Heart right ventricle (tissue), 16 donors: ENCODE measurements at regions of chr11 and their contacts with region 1.

Region 1: DNA sequence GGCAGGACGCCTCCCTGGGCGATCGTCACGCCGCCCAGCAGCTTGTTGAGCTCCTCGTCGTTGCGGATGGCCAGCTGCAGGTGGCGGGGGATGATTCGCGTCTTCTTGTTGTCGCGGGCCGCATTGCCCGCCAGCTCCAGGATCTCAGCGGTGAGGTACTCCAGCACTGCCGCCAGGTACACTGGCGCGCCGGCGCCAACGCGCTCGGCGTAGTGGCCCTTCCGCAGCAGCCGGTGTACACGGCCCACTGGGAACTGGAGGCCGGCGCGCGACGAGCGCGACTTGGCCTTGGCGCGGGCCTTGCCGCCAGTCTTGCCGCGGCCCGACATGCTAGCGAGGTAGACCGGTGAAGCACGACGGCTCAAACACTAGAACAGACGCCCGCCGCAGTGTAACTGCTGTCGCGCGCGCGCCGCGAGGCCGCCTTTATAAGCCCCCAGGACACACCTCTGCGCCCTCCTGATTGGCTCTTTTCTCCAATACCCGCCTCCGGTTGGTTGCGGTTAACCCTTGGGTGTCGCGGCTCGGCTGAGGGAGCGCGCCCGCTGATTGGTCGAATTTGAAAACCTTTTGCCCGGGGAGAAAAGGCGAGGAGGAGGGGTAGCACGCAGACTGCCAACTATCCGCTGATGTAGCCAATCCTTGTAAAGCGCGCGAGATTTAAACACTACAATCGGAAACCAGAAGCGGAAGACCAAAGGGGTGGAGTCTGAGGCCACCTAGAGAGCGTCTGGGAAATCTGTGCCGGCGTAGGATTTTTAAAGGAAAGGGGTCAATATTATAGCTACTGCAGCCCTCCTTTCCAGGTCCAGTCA is 6.4 kb downstream of the DPAGT1 start:
- DNase-seq: peak; percentile 97 to 99
- ATAC-seq: peak; percentile 94 to 98 (median 97)
- H3K4me3 ChIP-seq: peak overlapping the region; percentile 58 to 98 (median 84)
- H3K27ac ChIP-seq: peak overlapping the region; percentile 82 to 95 (median 94)
- H3K4me1 ChIP-seq: peaks cover 10 to 47% (median 28%) of the 10 kb centered on the region in 9 donors
- H3K27me3 ChIP-seq: no peaks in the 10 kb centered on the region
- CTCF ChIP-seq: peak in 3 of 9 donors; percentile 16 to 32 (median 20)

Region 2: GRCh38 chr11:118607401-118608359 is 487.6 kb before region 1 on chr11 and contains the start of gene PHLDB1:
- intact Hi-C with region 1: no loop called
- DNase-seq: peak; percentile 76 to 79
- ATAC-seq: peak; percentile 23 to 63 (median 51)
- H3K4me3 ChIP-seq: peak within 1 kb of the TSS; percentile 65 to 97 (median 92)
- H3K27ac ChIP-seq: peak within 1 kb of the TSS; percentile 94 to 99 (median 97)
- H3K4me1 ChIP-seq: peaks cover 10 to 83% (median 44%) of the 10 kb centered on the region in 9 donors
- H3K27me3 ChIP-seq: peaks cover 0 to 55% (median 0%) of the 10 kb centered on the region in 7 donors
- CTCF ChIP-seq: peak; percentile 11 to 72 (median 58)
- total RNA-seq, gene PHLDB1: 81.9 to 125 (median 114) TPM

Region 3: DNA sequence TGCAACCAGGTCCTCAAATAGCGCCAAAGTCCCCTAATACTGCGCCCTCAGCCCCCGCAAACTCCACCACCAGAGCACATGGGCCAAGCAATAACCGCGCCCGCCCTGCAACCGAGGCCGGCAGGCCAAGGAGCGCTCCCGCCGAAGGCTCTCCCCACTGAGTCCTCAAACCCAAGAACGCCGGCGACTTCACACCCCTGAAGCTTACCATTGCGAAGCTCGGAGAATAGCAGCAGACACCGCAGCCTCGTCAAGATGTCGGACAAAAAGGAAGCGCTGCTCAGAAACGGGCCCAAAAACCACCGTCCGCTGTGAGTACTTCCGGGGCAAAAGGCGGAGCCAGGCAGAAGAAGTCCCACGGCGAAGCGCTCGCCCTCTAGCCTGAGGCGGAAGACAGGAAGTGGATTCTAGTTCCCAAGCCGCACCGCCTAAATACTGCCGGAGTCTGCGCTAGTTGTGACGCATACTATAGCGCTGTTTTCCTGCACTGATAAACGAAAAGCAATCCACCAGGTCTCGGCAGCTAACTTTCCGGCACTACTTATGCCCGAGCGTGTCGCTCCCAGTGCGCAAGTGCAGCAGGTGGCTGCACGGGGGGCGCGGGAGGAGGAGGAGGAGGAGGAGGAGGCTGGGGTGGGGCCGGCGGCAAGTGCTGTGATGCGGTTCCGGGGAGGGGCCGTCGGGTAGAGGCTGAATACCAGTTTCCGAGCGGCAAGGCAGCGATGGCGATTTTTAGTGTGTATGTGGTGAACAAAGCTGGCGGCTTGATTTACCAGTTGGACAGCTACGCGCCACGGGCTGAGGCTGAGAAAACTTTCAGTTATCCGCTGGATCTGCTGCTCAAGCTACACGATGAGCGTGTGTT is 77.0 kb before region 1 on chr11 and contains the starts of genes RPS25 and TRAPPC4:
- intact Hi-C with region 1: loop called in 2 of 10 experiments (anchors 1 to 5 kb)
- DNase-seq: peak; percentile 93 to 96
- ATAC-seq: peak; percentile 95 to 98 (median 96)
- H3K4me3 ChIP-seq: peak within 1 kb of the TSS; percentile 81 to 99 (median 86)
- H3K27ac ChIP-seq: peak within 1 kb of the TSS; percentile 80 to 98 (median 94)
- H3K4me1 ChIP-seq: peaks cover 5 to 50% (median 44%) of the 10 kb centered on the region in 9 donors
- H3K27me3 ChIP-seq: no peaks in the 10 kb centered on the region
- CTCF ChIP-seq: peak in 1 of 9 donors; percentile 30
- total RNA-seq, gene RPS25: 743 to 915 (median 823) TPM
- total RNA-seq, gene TRAPPC4: 29.5 to 51.4 (median 37.5) TPM

Region 4: DNA sequence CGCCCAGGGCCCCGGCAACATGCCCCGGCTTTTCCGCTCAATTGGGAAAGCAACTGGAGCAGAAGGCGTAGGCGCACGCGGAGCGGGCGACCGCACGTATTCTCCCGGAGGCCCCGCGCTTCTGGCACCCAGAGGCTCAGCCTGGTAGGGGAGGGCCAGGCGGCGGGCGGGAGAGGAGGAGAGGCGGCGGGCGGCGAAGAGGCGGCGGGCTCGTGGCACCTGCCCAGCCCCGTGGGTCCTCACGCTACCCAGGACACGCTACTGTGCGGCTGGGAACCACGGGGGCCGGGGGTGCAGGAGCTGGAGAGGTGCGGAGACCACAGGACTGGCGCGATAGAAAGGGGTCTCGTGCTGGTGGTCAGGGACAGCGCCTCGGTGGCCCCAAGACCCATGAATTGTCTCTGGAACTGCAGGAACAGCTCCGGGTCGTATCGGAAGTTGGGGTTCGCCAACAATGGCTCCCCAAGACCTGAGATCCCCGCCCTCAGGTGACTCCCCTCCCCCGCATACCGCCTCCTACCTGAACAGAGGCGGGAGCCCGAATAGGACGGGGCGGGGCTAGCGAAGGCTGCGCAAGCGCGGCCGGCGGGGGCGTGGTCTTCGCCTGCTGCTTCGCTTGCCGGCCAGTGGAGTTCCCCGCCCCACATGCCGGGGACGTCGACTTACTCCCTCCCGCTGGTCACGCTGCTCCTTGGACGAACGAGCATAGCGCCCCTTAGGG is 64.8 kb before region 1 on chr11 and contains the start of gene SLC37A4:
- intact Hi-C with region 1: loop called in 1 of 10 experiments (anchors 2 kb)
- DNase-seq: peak; percentile 97 to 98
- ATAC-seq: peak; percentile 96 to 99 (median 98)
- H3K4me3 ChIP-seq: peak within 1 kb of the TSS; percentile 67 to 89 (median 80)
- H3K27ac ChIP-seq: peak within 1 kb of the TSS in 9 of 10 donors; percentile 30 to 86 (median 73)
- H3K4me1 ChIP-seq: peaks cover 9 to 33% (median 24%) of the 10 kb centered on the region in 9 donors
- H3K27me3 ChIP-seq: no peaks in the 10 kb centered on the region
- CTCF ChIP-seq: peak in 6 of 9 donors; percentile 80 to 94 (median 86)
- total RNA-seq, gene SLC37A4: 3.8 to 12.0 (median 6.5) TPM

Region 5: DNA sequence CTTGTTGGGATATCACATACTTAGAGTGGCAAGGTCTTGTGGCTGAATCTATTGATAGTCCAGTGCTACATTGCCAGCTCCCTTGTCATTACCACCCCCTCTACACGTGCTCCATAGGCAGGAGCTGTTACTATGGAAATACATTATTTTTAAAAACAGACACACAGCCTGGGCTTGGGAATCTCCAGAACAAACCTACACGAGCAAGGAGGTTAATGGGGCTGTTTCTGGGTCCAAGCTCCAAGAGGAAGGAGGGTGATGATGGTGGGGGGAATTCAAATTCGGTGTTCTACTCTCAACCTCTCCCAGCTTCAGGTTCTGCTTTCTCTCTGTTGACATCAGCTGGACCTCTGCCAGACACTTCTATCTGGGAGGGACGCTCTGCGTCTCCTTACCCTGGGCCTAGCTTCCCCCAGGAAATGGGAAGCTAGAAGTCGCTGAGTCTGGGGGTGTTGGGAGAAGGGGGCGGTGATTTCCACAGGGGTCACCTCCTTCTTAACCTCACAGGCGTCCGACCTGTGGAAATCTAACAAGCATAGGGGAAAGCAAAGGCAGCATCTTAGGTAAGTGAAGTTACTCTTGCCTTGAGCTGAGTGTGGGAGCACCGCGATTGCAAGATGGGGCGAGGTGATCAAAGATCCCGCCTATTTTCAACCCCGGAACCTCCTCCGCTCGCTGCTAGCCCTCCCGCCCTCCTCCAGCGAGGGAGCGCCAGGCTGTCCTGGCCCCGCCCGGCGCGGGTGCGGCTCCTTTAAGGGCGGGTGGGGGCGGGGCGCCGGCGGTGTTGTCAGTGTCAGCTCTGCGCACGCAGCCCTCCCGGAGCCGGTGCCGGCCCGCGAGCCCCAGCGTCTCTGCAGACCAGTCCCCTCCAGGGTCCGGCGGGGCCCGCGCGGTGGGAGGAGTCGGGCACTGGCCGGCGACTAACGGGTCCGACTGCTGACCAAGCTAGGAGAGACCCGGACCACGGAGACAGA is 11.6 kb after region 1 on chr11 and contains the start of gene C2CD2L:
- intact Hi-C with region 1: no loop called
- DNase-seq: peak; percentile 88 to 91
- ATAC-seq: peak; percentile 91 to 95 (median 94)
- H3K4me3 ChIP-seq: peak within 1 kb of the TSS; percentile 72 to 100 (median 89)
- H3K27ac ChIP-seq: peak within 1 kb of the TSS; percentile 1 to 91 (median 78)
- H3K4me1 ChIP-seq: peaks cover 15 to 56% (median 38%) of the 10 kb centered on the region in 9 donors
- H3K27me3 ChIP-seq: no peaks in the 10 kb centered on the region
- CTCF ChIP-seq: no peak
- total RNA-seq, gene C2CD2L: 6.6 to 13.7 (median 8.4) TPM

Region 6: GRCh38 chr11:119121008-119121810 is 25.9 kb after region 1 on chr11 and contains the start of gene HINFP:
- intact Hi-C with region 1: loop called in 2 of 10 experiments (anchors 1 kb)
- DNase-seq: peak; percentile 100
- ATAC-seq: peak; percentile 99 to 100 (median 100)
- H3K4me3 ChIP-seq: peak within 1 kb of the TSS; percentile 62 to 99 (median 82)
- H3K27ac ChIP-seq: peak within 1 kb of the TSS; percentile 52 to 87 (median 80)
- H3K4me1 ChIP-seq: peaks cover 6 to 30% (median 23%) of the 10 kb centered on the region in 9 donors
- H3K27me3 ChIP-seq: no peaks in the 10 kb centered on the region
- CTCF ChIP-seq: no peak
- total RNA-seq, gene HINFP: 8.9 to 15.8 (median 11.5) TPM

Region 7: DNA sequence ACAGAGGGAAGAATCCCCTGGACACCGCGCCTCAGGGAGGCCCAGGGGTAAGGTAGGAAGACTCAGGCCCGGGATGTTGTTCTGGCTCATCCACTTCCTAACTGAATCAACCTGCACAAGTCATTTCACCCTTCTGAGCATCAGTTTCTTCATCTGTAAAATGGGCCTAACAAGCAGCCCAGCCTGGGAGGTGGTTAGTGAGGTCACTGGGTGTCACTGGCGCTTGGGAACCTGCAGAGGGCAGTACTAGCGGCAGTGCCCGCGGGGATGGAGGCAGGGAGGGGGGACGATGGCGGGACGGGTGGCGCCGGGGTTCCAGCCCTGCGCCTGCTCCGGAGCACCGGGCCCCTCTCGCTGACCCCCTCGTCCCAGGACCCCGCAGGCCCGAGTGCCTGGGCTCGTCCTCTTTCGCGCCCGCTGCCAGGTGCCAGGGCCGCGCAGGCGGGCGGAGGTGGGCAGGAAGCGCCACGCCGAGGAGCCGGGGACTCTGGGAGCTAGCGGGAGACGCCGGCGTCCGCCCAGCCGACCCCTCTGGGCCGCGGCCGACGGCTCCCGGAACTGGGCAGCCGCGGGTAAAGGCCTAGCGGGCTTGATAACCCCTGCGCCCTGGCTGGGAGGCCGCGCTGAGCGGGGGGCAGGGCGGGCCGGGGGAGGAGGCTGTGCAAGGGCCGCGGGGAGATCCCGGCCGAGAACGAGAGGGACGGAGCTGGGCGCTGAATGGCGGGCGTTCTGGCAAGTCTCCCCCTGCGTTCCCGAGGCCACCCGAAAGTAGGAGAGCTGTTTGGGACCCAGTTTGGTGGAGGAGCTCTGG is 73.4 kb after region 1 on chr11 and contains the start of gene NLRX1:
- intact Hi-C with region 1: loop called in 1 of 10 experiments (anchors 2 kb)
- DNase-seq: peak; percentile 83 to 88
- ATAC-seq: peak; percentile 91 to 96 (median 94)
- H3K4me3 ChIP-seq: peak within 1 kb of the TSS; percentile 69 to 100 (median 88)
- H3K27ac ChIP-seq: peak within 1 kb of the TSS; percentile 89 to 99 (median 96)
- H3K4me1 ChIP-seq: peaks cover 0 to 19% (median 8%) of the 10 kb centered on the region in 9 donors
- H3K27me3 ChIP-seq: no peaks in the 10 kb centered on the region
- CTCF ChIP-seq: peak; percentile 77 to 93 (median 91)
- total RNA-seq, gene NLRX1: 24.3 to 39.3 (median 33.6) TPM

Region 8: GRCh38 chr11:119196833-119197483 is 101.7 kb after region 1 on chr11:
- intact Hi-C with region 1: loop called in 7 of 10 experiments (anchors 2 to 10 kb)
- DNase-seq: peak in 1 of 2 donors; percentile 79
- ATAC-seq: peak; percentile 66 to 91 (median 84)
- H3K4me3 ChIP-seq: no peak overlapping the region
- H3K27ac ChIP-seq: no peak overlapping the region
- H3K4me1 ChIP-seq: peaks cover 0 to 18% (median 0%) of the 10 kb centered on the region in 9 donors
- H3K27me3 ChIP-seq: no peaks in the 10 kb centered on the region
- CTCF ChIP-seq: peak; percentile 66 to 87 (median 81)

Region 9: GRCh38 chr11:119315131-119316015 is 220.1 kb after region 1 on chr11:
- intact Hi-C with region 1: loop called in 2 of 10 experiments (anchors 5 to 10 kb)
- DNase-seq: peak; percentile 32 to 53
- ATAC-seq: peak; percentile 9 to 56 (median 30)
- H3K4me3 ChIP-seq: peak overlapping the region; percentile 53 to 94 (median 80)
- H3K27ac ChIP-seq: peak overlapping the region; percentile 82 to 99 (median 92)
- H3K4me1 ChIP-seq: peaks cover 11 to 80% (median 51%) of the 10 kb centered on the region in 9 donors
- H3K27me3 ChIP-seq: peaks cover 0 to 58% (median 0%) of the 10 kb centered on the region in 7 donors
- CTCF ChIP-seq: peak in 2 of 9 donors; percentile 23 to 38